GM13976 (cell line): ENCODE measurements at regions of chr6 and their contacts with region 1.

Region 1: DNA sequence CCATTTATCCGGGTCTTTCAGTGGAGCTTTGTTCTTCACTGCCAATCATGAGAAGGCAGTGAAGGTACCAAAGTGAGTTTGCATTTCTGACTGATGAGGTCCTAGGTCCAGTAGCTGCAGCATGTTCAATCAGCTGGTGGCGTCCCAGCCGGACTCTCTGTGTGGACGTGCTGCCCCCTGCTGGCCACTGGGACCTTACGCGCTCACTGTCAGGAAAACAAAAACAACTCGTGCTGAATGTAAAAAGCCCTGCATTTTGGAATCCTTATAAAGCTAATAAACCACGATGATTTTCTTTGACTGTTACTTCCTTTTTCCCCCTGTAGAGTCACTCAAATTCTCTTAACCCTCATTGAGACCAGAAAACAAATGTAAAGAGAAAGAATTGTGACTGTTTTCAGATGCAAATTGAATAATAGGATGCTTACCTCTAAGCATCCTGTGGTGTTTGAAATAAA is 4.9 kb upstream of the CD24 start:
- DNase-seq: peak; percentile 81
- CTCF ChIP-seq: peak; percentile 88

Region 2: DNA sequence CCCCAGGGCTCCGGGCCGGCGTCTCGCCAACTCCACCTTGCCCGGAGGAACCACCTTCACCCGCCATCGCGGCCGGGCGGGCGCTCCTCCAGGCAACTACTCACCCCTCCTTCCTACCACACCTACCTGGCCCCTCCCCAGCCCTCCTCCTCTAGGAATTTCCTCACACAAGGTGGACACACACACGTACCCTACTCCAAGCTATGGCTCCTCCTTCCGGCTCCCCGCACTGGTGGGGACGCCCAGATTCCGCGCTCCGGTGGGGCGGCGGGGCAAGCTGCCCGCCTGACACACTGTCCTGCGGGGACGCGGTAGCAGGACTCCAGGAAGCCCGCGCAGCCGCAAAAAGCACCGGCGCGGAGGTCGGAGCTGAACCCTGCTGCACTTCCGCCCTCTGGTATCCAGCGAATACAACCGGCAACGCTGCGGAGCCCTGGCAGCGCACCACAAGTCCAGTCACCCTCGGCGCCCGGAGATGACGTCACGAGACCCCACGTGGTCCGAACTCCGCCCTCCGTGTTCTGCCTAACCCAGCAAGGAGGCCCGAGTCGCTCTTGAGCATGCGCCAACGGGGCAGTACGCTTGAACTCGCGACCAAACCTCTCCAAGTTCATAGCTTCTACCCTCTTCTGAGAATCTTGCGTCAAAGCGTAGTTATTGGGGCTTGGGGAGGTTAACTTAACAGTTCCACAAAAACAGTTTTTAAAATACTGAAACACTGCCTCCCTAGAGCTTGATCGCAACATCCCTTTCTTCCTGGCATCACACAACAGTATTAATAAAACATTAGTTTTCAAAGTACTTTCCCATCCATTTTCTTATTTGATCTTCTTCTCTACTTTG is 653.9 kb before region 1 on chr6 and contains the start of gene ATG5:
- in situ Hi-C with region 1: loop called (anchors 25 kb)
- DNase-seq: peak; percentile 99
- CTCF ChIP-seq: no peak

Region 3: GRCh38 chr6:106444777-106445507 is 534.5 kb before region 1 on chr6:
- in situ Hi-C with region 1: loop called (anchors 10 kb)
- DNase-seq: peak; percentile 69
- CTCF ChIP-seq: peak; percentile 48

Region 4: GRCh38 chr6:106539936-106540335 is 439.5 kb before region 1 on chr6:
- in situ Hi-C with region 1: no loop called
- DNase-seq: no peak
- CTCF ChIP-seq: no peak

Region 5: GRCh38 chr6:106556368-106556960 is 423.0 kb before region 1 on chr6:
- in situ Hi-C with region 1: loop called (anchors 25 kb)
- DNase-seq: no peak
- CTCF ChIP-seq: peak; percentile 16

Region 6: GRCh38 chr6:106608062-106608668 is 371.3 kb before region 1 on chr6:
- in situ Hi-C with region 1: loop called (anchors 5 kb)
- DNase-seq: peak; percentile 51
- CTCF ChIP-seq: peak; percentile 50

Region 7: DNA sequence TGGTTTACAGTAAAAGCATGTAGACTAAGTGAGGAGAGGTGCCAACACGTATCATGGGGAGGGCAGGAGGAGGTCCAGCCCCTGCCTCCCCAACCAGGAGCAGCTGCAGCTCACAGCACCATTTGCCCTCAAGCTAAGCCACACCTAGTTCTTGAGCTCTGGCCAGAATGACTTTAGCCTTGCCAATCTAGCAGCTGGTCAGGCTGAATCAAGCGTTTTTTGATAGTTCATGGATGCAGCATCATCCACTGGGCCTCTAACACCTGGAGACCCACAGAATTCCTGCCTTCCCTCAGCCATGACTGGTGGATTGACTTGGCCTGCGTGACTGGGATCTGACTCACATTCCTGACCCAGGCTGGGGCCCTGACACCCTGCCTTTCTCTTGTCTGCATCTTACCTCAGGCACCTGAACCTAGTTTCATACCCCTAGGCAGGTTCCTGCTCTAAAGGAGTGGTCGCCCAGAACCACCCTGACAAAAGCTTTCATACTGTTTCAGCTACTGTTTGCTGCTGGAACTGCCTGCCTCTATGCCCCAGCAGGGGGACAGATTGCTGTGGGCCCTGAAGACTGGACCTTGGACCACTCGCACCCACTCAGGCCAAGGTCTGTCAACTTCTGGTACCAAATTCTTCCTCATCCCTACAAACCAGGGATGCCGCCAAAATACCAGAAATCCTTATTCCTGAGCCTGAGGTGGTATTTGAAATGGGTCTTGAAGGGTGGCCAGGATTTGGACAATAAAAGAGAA is 227.8 kb before region 1 on chr6:
- in situ Hi-C with region 1: no loop called
- DNase-seq: no peak
- CTCF ChIP-seq: no peak

Region 8: GRCh38 chr6:106804346-106805335 is 174.8 kb before region 1 on chr6:
- in situ Hi-C with region 1: no loop called
- DNase-seq: no peak
- CTCF ChIP-seq: no peak

Region 9: DNA sequence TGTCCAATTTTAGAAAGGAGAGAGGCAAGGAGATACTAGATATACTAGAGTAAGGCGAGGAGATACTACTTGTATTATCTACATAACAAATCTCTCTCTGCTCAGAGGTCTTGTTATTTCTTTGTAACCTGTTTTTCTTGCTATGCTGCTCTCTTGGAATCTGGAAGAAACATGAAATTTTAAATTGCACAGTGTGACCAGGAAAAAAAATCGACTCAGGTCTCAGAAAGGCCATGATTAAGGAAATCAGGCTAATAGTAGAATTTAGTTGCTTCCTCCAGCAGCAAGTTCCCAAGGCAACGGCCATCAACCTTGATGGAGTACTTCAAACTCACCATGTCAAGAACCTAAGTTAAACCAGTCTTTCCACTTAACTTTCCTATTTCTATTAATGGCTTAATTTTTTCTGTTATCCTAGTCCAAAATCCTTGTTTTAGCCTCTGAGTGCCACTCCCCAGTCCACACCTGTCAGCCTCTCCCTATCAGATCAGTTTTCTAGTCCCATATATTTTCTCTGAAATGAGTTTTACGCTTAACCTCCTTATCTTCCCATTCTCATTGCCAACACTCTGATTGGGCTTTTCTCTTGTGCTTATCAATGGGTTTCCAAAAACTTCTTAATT is 223.5 kb after region 1 on chr6:
- in situ Hi-C with region 1: no loop called
- DNase-seq: no peak
- CTCF ChIP-seq: no peak